HEK293T (cell line): ENCODE measurements at regions of chr4 and their contacts with region 1.

Region 1: DNA sequence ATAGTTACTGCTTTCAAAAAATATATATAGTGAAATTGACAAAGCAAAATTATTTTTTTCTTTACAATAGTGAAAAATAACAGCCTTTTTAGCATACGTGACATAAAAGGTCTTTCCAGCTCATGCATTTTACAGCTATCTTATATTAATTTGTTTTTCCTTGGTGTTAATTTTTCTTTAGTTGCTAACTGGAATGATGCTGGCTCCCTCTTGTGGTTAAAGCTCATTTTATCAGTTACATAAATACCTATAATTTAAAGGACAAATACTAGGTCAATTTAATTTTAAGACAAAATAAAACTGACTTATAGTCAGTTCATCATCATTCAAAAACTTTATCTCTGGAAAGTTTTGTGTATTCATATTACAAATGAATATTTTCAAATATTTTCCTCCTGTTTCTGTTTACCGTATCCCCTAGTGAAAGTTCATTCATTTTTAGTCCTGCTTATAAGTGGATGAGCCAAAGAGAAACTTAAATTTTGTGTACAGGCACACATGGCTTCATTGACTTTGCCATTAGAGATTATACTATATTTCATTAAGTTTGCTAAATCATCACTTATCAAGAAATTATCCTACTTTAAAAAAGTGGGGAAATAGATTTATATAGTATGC is 9.9 kb upstream of the ANAPC4 start:
- DNase-seq: no peak

Region 2: GRCh38 chr4:25312496-25313200 is 54.5 kb before region 1 on chr4 and contains the start of gene ZCCHC4:
- CTCF ChIA-PET with region 1: interaction called, 10 read pairs
- POLR2A ChIA-PET with region 1: interaction called, 4 read pairs
- DNase-seq: peak; percentile 86

Region 3: DNA sequence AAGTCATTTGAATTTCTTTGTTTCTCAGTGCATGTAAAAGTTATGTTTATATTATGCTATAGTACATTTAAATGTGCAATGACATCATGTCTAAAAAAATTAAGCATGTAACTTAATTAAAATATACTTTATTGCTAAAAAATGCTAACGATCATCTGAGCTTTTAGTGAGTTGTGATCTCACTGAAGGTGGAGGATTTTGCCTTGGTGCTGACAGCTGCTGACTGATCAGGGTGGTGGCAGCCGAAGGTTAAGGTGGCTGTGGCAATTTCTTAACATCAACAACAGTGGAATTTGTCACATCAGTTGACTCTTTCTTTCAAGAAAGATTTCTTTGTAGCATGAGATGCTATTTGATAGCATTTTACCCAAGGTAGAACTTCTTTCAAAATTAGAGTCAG is 16.5 kb after region 1 on chr4:
- CTCF ChIA-PET with region 1: no interaction called
- POLR2A ChIA-PET with region 1: no interaction called
- DNase-seq: no peak